ENCODE measurements at regions of chr16 and their contacts with region 1.

Region 1: GRCh38 chr16:180938-181667 is 844 bp downstream of the HBQ1 start:
- DNase-seq: peak; percentile 78
- H3K4me3 Mint-ChIP-seq: peak overlapping the region; percentile 33
- H3K27ac Mint-ChIP-seq: no peak overlapping the region
- H3K4me1 Mint-ChIP-seq: no peaks in the 10 kb centered on the region
- H3K27me3 Mint-ChIP-seq: peaks cover 27% of the 10 kb centered on the region

Region 2: GRCh38 chr16:65671-66137 is 115.4 kb before region 1 on chr16:
- intact Hi-C with region 1: loop called (anchors 1 kb)
- DNase-seq: peak; percentile 75
- H3K4me3 Mint-ChIP-seq: no peak overlapping the region
- H3K27ac Mint-ChIP-seq: no peak overlapping the region
- H3K4me1 Mint-ChIP-seq: peaks cover 7% of the 10 kb centered on the region
- H3K27me3 Mint-ChIP-seq: peaks cover 30% of the 10 kb centered on the region

Region 3: DNA sequence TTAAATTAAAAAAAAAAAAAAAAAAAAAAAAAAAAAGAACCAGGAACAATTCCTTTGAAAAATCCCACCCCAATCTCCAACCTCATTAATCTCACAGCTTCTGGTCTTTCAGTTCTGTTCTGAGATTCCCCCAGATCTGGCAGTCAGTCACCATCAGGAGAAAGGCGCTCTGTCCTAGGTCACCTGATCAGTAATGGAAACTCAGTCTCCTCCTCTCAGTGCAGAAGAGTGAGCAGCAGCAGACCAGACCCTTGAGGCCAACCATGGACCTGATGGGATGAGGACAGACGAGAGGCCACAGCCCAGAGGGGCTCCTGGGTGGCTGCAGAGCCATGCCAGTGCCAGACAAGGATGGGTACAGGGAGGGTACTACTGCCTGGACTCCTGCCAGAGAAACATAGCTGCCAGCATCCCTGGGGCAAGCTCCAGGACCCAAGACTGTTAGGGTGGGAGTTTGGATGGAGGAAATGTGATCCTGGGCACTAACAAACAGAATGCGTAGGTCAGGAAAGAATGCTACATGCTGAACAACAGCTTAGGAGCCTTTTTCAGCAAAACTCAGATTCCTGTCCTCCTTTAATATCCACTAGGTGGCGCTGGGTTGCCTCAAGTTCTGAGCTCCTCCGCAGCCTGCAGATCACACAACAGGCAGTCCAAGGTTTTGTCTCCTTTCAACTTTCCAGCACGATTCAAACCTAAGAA is 74.3 kb before region 1 on chr16:
- intact Hi-C with region 1: loop called (anchors 1 kb)
- DNase-seq: peak; percentile 34
- H3K4me3 Mint-ChIP-seq: no peak overlapping the region
- H3K27ac Mint-ChIP-seq: no peak overlapping the region
- H3K4me1 Mint-ChIP-seq: peaks cover 5% of the 10 kb centered on the region
- H3K27me3 Mint-ChIP-seq: no peaks in the 10 kb centered on the region

Region 4: DNA sequence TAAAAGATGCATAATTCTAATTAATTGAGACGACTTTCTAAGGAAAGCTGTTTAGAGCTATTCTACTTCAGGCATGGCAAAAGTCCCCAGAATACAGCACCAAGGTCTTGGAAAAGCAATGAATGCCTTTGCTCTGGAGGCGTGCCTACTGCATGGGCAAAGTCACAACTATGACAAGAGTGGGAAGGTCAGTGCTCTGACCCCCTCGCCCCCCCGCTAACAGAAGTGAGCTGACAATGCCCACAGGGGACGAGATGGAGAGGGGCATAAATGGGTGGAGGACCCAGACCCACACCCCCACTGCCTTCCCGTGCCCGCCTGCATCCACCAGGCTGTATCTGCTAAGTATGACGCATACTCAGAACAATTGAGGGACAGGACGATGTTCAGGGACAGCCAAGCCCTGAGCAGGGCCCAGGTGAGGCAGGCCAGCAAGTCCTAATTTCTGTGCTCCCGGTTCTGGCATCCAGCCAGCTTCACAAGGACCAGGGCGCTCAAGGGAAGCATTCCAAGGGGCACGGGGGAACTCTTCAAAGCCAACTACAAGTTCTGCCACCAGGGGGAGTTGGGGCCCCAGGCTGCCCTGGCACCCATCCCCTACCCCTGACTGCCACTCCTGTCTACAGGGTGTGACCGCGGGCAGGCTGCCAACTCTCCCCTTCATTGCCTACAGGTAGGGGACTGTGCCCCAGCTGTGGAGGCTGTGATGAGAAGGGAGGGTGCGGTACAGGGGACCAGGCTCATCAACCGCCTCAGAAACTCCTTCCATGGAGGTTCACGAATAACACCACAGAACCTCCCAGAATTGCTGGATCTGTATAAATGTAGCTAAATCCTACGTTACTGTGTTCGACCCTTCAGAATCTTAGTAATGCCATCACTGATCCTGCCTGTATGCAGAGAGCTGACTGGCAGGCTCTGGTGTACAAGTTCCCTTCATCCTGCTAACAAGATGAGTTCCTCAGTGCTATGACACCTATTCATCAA is 63.4 kb before region 1 on chr16:
- intact Hi-C with region 1: loop called (anchors 1 kb)
- DNase-seq: peak; percentile 42
- H3K4me3 Mint-ChIP-seq: no peak overlapping the region
- H3K27ac Mint-ChIP-seq: no peak overlapping the region
- H3K4me1 Mint-ChIP-seq: peaks cover 12% of the 10 kb centered on the region
- H3K27me3 Mint-ChIP-seq: no peaks in the 10 kb centered on the region

Region 5: GRCh38 chr16:138049-138417 is 43.1 kb before region 1 on chr16:
- intact Hi-C with region 1: loop called (anchors 1 kb)
- DNase-seq: peak; percentile 27
- H3K4me3 Mint-ChIP-seq: peak overlapping the region; percentile 86
- H3K27ac Mint-ChIP-seq: no peak overlapping the region
- H3K4me1 Mint-ChIP-seq: peaks cover 15% of the 10 kb centered on the region
- H3K27me3 Mint-ChIP-seq: peaks cover 2% of the 10 kb centered on the region

Region 6: GRCh38 chr16:165539-166374 is 15.3 kb before region 1 on chr16 and contains the start of gene HBM:
- intact Hi-C with region 1: loop called (anchors 2 kb)
- DNase-seq: no peak
- H3K4me3 Mint-ChIP-seq: no peak within 1 kb of the TSS
- H3K27ac Mint-ChIP-seq: no peak within 1 kb of the TSS
- H3K4me1 Mint-ChIP-seq: peaks cover 5% of the 10 kb centered on the region
- H3K27me3 Mint-ChIP-seq: peaks cover 49% of the 10 kb centered on the region
- total RNA-seq, gene HBM: not detected in 2 replicates

Region 7: DNA sequence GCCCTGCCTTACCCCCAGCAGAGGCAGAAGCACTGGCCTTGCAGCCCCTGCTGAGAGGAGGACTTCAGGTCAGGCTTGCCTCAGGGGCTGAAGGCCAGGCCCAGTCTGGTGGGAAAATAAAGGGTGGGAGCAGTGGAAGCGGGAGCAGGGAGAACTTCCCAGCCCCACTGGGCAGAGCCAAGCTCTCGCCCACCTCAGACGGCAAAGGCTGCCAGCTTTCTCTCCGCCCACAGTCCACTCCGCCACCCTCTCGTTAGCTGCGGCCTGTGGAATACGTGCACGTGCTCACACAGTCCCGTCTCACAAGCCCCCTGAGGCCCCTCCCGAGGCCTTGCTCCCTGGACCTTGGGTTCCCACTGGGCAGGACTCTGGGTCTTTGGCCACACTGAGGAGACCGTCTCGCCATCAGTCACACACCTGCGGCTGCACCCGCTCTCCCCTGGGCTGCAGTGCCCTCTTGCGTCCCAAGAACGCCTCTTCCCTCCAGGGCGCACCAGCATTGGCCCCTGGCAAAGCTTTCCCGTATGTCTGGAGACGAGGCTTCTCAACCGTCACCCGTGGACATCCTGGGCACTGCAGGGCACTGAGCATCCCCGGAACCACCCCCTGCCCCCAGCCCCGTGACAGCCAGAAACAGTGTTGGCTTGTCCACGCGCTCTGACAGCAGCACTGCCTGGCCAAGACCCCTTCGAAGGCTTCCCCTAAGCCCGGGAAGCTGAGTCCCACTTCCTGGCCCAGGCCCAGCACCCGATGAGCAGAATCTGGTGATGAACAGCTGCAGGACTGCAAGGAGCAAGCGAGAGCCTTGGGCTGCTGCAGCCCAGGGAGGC is 181.0 kb after region 1 on chr16:
- intact Hi-C with region 1: loop called (anchors 5 kb)
- DNase-seq: peak; percentile 60
- H3K4me3 Mint-ChIP-seq: no peak overlapping the region
- H3K27ac Mint-ChIP-seq: no peak overlapping the region
- H3K4me1 Mint-ChIP-seq: peaks cover 6% of the 10 kb centered on the region
- H3K27me3 Mint-ChIP-seq: peaks cover 1% of the 10 kb centered on the region